ENCODE measurements at regions of chr20 and their contacts with region 1.

Region 1: DNA sequence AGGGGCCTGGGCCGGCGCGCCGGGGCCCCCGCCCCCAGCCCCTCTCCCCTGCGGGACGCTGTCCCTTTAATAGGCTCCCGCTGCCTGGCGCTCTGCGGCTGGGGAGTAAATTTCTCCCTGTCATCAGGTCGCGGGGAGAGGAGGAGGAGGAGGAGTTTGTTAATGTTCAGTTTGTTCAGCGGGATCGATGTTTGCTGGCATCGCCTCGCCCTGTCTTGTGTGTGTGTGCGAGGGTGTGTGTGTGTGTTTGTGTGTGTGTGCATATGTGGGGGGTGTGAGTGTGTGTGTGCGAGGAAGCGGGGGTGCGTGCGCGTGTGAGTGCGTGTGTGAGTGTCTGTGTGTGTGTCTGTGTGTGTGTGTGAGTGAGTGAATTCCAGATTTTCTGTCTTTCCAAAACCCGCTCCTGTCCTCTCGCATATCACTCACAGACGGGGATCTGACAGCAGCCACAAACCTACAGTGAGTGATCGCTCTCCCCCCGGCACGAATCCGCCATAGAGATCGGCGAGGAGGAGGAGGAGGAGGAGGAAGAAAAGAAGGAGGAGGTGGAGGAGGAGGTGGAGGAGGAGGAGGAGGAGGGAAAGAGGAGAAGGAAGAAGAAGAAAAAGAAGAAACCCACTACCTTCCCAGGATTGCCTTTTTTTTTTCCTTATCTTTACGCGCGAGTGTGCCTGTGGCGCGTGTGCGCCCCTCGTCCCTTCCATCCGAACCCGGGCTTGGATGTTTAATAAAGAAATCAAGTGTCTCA is at the start of gene TSHZ2:
- DNase-seq: peak; percentile 45 to 77 (median 60)
- H3K4me3 ChIP-seq: peak within 1 kb of the TSS; percentile 49 to 63
- H3K4me3 Mint-ChIP-seq: peak within 1 kb of the TSS; percentile 91 to 98 (median 96)
- H3K27ac ChIP-seq: peak within 1 kb of the TSS; percentile 71
- H3K27ac Mint-ChIP-seq: peak within 1 kb of the TSS; percentile 89 to 98 (median 96)
- H3K4me1 ChIP-seq: peaks cover 29% of the 10 kb centered on the region
- H3K4me1 Mint-ChIP-seq: peaks cover 11 to 56% (median 29%) of the 10 kb centered on the region in 4 donors
- H3K27me3 ChIP-seq: no peaks in the 10 kb centered on the region
- H3K27me3 Mint-ChIP-seq: peaks cover 5 to 28% of the 10 kb centered on the region in 2 donors
- total RNA-seq, gene TSHZ2: 30.2 to 31.8 TPM

Region 2: DNA sequence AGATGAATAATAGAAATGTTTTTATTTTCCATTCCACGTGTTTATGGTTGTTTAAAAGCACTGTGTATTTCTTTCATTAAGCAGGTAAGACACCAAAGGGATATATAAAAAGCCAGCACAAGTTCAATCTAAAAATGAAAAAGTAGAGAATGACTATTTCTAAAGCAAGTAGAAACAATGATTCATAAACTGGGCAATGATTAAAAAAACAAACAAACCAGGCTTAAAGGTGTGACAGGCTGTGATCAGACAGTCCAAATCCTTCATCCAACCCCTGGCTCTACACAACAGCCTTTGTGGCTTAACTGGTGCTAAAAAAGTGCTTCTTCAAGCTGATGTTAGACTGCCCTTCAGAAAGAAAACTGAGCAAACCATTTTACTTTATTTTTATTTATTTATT is 45.9 kb before region 1 on chr20:
- CTCF ChIA-PET with region 1: no interaction called
- POLR2A ChIA-PET with region 1: no interaction called
- intact Hi-C with region 1: no loop called
- DNase-seq: no peak
- H3K4me3 ChIP-seq: no peak overlapping the region
- H3K4me3 Mint-ChIP-seq: no peak overlapping the region
- H3K27ac ChIP-seq: no peak overlapping the region
- H3K27ac Mint-ChIP-seq: no peak overlapping the region
- H3K4me1 ChIP-seq: no peaks in the 10 kb centered on the region
- H3K4me1 Mint-ChIP-seq: no peaks in the 10 kb centered on the region
- H3K27me3 ChIP-seq: no peaks in the 10 kb centered on the region
- H3K27me3 Mint-ChIP-seq: peaks cover 0 to 3% of the 10 kb centered on the region in 2 donors

Region 3: DNA sequence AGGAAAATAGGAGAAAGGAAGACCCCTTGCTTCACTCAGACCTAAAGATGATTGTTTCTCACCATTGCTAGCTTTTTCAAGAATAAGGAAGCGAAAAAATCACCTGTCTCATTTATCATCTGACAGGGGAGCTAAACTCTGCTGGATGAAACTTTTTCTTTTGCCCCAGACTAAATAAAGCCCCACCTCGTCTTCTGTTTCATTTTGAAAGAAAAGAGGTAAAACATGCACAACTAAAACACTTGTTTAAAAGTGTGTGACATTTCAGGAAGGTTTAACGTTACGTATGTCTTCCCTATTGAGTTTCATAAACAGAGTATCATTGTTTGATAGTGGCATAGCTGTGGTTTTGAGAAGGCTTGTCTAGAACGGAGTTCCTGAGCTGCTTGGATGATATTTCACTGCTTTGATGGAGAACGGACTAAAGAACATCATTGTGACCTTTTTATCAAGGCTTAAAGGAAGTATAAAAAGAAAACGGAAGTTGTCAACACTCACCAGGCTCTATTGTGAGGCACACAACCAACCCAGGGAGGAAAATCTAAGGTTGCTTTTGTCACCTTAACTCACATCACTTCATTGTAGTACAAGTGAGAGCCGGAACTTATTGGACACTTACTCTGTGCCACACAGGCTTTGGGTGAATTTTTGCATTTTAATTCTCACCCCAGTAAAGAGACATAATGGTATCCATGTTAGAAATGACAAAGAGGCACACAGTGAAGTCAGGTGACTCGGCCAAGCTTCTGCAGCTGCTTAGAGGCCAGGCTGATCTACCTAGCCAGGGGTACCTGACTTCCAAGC is 29.3 kb after region 1 on chr20:
- CTCF ChIA-PET with region 1: interaction called, 21 read pairs
- POLR2A ChIA-PET with region 1: interaction called, 111 read pairs
- intact Hi-C with region 1: loop called (anchors 1 kb)
- DNase-seq: peak in 4 of 5 donors; percentile 30 to 52 (median 38)
- H3K4me3 ChIP-seq: peak overlapping the region; percentile 30 to 39
- H3K4me3 Mint-ChIP-seq: peak overlapping the region; percentile 74 to 92 (median 84)
- H3K27ac ChIP-seq: peak overlapping the region; percentile 41
- H3K27ac Mint-ChIP-seq: peak overlapping the region; percentile 87 to 98 (median 94)
- H3K4me1 ChIP-seq: peaks cover 42% of the 10 kb centered on the region
- H3K4me1 Mint-ChIP-seq: peaks cover 24 to 50% (median 44%) of the 10 kb centered on the region in 4 donors
- H3K27me3 ChIP-seq: no peaks in the 10 kb centered on the region
- H3K27me3 Mint-ChIP-seq: peaks cover 0 to 5% of the 10 kb centered on the region in 2 donors

Region 4: DNA sequence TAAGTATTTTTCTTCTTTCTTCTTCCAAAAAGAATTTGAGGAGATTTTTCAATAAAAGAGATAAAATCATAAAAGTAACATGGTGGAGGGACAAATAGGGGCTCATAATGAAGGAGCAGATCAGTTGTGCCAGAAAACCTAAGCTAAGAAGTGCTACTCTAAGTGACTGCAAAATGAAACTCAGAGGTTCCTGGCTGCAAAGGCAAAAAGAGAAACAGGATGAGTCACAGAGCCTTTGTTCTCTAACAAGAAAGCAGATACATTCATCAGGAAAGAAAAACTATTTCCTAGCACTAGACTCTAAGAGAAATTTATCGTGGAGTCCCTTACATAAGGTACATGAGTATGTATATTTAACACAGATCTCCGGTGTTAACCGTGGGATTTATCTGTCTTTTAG is 49.6 kb after region 1 on chr20:
- CTCF ChIA-PET with region 1: no interaction called
- POLR2A ChIA-PET with region 1: interaction called, 4 read pairs
- intact Hi-C with region 1: loop called (anchors 5 kb)
- DNase-seq: peak in 1 of 5 donors; percentile 20
- H3K4me3 ChIP-seq: no peak overlapping the region
- H3K4me3 Mint-ChIP-seq: peak overlapping the region in 6 of 8 donors; percentile 32 to 65 (median 49)
- H3K27ac ChIP-seq: no peak overlapping the region
- H3K27ac Mint-ChIP-seq: peak overlapping the region in 5 of 7 donors; percentile 42 to 87 (median 54)
- H3K4me1 ChIP-seq: peaks cover 10% of the 10 kb centered on the region
- H3K4me1 Mint-ChIP-seq: peaks cover 7 to 35% (median 20%) of the 10 kb centered on the region in 4 donors
- H3K27me3 ChIP-seq: no peaks in the 10 kb centered on the region
- H3K27me3 Mint-ChIP-seq: peaks cover 2 to 9% of the 10 kb centered on the region in 2 donors

Region 5: DNA sequence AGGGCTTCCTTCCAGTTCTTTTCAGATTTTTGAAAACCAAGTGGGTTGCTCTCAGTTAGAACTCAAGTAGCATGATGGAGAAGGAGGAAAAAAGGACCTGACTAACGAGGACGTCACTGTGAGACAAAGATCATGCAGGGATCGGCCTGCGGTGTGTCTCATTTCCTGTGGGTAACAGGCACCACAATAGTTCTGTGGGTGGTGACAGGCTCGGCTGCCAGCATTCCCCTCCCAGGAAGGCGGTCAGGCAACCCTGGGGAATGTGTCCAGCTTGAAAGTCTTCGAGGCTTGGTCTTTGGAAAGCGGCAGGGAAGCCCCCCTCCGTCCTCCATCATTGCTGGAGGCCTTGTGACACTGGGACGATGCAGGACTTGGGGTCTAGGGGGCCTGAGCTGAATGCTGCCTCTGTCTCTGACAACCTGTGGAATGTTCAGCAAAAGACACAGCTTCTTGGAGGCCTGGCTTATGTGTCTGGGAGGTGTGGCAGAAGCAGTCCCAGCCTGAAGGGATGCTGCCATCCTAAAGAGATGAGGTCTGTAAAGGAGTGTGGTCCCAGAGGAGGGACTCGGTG is 977.0 kb after region 1 on chr20:
- CTCF ChIA-PET with region 1: no interaction called
- POLR2A ChIA-PET with region 1: no interaction called
- intact Hi-C with region 1: loop called (anchors 5 kb)
- DNase-seq: peak; percentile 82 to 92 (median 87)
- H3K4me3 ChIP-seq: peak overlapping the region; percentile 6 to 30
- H3K4me3 Mint-ChIP-seq: peak overlapping the region; percentile 39 to 79 (median 72)
- H3K27ac ChIP-seq: peak overlapping the region; percentile 78
- H3K27ac Mint-ChIP-seq: peak overlapping the region; percentile 96 to 100 (median 99)
- H3K4me1 ChIP-seq: peaks cover 36% of the 10 kb centered on the region
- H3K4me1 Mint-ChIP-seq: peaks cover 24 to 41% (median 32%) of the 10 kb centered on the region in 4 donors
- H3K27me3 ChIP-seq: no peaks in the 10 kb centered on the region
- H3K27me3 Mint-ChIP-seq: no peaks in the 10 kb centered on the region

Measured in CD4-positive, alpha-beta memory T cell (primary cell).